ENCODE measurements at regions of chr9 and their contacts with region 1.

Region 1: DNA sequence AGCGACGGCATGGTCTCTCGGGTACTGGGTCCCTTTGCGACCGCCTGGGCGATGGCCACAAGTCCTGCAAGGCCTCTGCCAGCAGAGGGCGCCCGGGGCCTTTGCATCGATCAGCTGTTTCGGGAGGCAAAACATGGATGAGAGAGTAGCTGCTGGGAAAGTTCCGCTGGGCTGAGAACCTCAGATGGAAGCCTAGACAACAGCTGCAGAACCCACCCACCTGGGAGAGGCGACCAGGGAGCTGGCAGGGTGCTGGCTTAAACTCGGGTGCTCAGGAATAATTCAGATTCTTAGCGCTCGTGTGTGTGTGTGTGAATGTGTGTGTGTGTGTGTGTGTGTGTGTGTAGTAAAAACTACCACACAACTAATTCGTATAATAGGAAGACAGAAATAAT is 50.0 kb downstream of the TRIM32 start:
- DNase-seq: peak; percentile 1
- ATAC-seq: peak; percentile 91
- H3K4me3 ChIP-seq: no peak overlapping the region
- H3K27ac ChIP-seq: no peak overlapping the region
- H3K4me1 ChIP-seq: peaks cover 10% of the 10 kb centered on the region
- H3K27me3 ChIP-seq: no peaks in the 10 kb centered on the region
- CTCF ChIP-seq: peak; percentile 94 to 98 (median 96)
- EP300 ChIP-seq: no peak
- POLR2A ChIP-seq: no peak
- RAD21 ChIP-seq: peak; percentile 98

Region 2: DNA sequence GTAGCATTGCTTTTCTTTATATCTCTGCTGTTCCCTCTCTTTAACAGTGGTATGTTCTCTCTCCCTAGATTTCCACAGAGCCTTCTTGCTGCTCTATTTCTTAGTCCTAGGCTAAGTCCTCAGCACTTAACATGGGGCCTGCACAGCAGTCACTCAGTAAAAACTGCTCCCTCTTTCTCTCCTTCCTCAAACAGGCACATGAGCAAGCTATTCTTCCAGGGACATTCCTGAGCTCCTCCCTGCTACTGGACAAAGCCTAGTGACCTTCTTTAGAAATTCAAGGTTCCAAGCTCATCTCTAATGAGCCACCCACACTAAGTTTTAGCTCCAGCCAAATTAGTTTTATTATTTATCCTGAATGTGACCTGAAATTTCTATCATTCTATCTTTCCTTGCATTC is 10.5 kb before region 1 on chr9:
- CTCF ChIA-PET with region 1: interaction called, 11 read pairs
- POLR2A ChIA-PET with region 1: no interaction called
- RAD21 ChIA-PET with region 1: no interaction called
- SMC1A ChIA-PET with region 1: no interaction called
- in situ Hi-C with region 1: no loop called
- intact Hi-C with region 1: no loop called
- DNase-seq: no peak
- ATAC-seq: no peak
- H3K4me3 ChIP-seq: no peak overlapping the region
- H3K27ac ChIP-seq: no peak overlapping the region
- H3K4me1 ChIP-seq: no peaks in the 10 kb centered on the region
- H3K27me3 ChIP-seq: no peaks in the 10 kb centered on the region; a peak in 3 of 4 replicates
- CTCF ChIP-seq: no peak
- EP300 ChIP-seq: no peak
- POLR2A ChIP-seq: no peak
- RAD21 ChIP-seq: no peak

Region 3: GRCh38 chr9:116774421-116775180 is 37.5 kb after region 1 on chr9:
- CTCF ChIA-PET with region 1: no interaction called
- POLR2A ChIA-PET with region 1: no interaction called
- RAD21 ChIA-PET with region 1: no interaction called
- SMC1A ChIA-PET with region 1: no interaction called
- in situ Hi-C with region 1: no loop called
- intact Hi-C with region 1: no loop called
- DNase-seq: no peak
- ATAC-seq: no peak
- H3K4me3 ChIP-seq: no peak overlapping the region
- H3K27ac ChIP-seq: no peak overlapping the region
- H3K4me1 ChIP-seq: no peaks in the 10 kb centered on the region
- H3K27me3 ChIP-seq: no peaks in the 10 kb centered on the region
- CTCF ChIP-seq: no peak
- EP300 ChIP-seq: no peak
- POLR2A ChIP-seq: no peak
- RAD21 ChIP-seq: no peak

Region 4: GRCh38 chr9:116789081-116789480 is 51.9 kb after region 1 on chr9:
- CTCF ChIA-PET with region 1: no interaction called
- POLR2A ChIA-PET with region 1: no interaction called
- RAD21 ChIA-PET with region 1: no interaction called
- SMC1A ChIA-PET with region 1: no interaction called
- in situ Hi-C with region 1: no loop called
- intact Hi-C with region 1: no loop called
- DNase-seq: no peak
- ATAC-seq: no peak
- H3K4me3 ChIP-seq: no peak overlapping the region
- H3K27ac ChIP-seq: no peak overlapping the region
- H3K4me1 ChIP-seq: no peaks in the 10 kb centered on the region
- H3K27me3 ChIP-seq: no peaks in the 10 kb centered on the region
- CTCF ChIP-seq: no peak
- EP300 ChIP-seq: no peak
- POLR2A ChIP-seq: no peak
- RAD21 ChIP-seq: no peak

Region 5: DNA sequence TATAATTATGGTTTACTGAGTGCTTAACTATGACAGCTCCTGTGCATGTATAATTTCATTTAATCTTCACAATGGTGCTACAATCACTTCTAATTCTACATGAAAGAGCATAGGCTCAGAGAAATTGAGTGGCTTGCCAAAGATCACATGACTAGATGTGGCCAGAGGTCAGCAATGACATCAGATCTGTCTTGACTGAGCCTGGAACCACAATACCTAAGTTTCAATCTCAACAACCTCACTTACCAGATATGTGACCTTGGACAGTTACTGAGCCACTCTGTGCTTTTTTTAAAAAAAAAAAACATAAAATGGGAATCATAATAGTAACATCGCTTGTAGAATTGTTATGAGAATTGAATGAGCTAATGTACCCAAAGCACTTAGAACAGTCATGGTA is 80.6 kb after region 1 on chr9:
- CTCF ChIA-PET with region 1: no interaction called
- POLR2A ChIA-PET with region 1: no interaction called
- RAD21 ChIA-PET with region 1: no interaction called
- SMC1A ChIA-PET with region 1: no interaction called
- in situ Hi-C with region 1: no loop called
- intact Hi-C with region 1: no loop called
- DNase-seq: no peak
- ATAC-seq: peak; percentile 89
- H3K4me3 ChIP-seq: no peak overlapping the region
- H3K27ac ChIP-seq: no peak overlapping the region
- H3K4me1 ChIP-seq: no peaks in the 10 kb centered on the region
- H3K27me3 ChIP-seq: no peaks in the 10 kb centered on the region
- CTCF ChIP-seq: no peak
- EP300 ChIP-seq: no peak
- POLR2A ChIP-seq: no peak
- RAD21 ChIP-seq: no peak

Region 6: DNA sequence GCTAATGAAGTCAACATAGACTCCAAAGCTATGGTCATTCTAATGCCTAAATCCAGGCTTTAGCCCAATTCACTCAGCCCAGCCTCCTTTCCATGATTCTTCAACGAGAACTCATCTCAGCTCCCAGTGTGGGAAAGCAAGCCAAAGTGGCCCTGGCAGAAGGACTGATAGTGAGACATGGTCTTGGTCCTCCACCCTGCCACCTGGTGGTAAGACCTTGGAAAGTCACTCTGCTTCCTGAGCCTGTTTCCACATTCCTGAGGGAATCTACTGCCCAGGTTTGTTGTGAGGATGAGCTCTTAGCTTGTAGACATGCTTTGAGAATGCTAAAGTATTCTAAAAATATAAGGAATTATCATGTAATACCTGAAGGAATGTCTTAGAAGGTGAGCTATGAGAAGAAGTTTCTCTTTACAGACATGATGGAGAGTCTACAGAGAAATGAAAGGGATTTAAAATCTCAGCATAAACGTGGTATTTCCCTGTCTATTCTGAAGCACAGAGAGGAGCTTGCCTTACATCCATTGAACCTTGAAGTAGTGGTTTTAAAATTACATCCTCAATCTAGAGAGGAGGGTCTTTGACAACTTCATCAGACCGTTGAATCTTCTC is 123.5 kb after region 1 on chr9:
- CTCF ChIA-PET with region 1: interaction called, 173 read pairs
- POLR2A ChIA-PET with region 1: no interaction called
- RAD21 ChIA-PET with region 1: interaction called, 60 read pairs
- SMC1A ChIA-PET with region 1: interaction called, 78 read pairs
- in situ Hi-C with region 1: loop called (anchors 5 kb)
- intact Hi-C with region 1: loop called (anchors 1 kb)
- DNase-seq: no peak
- ATAC-seq: peak; percentile 78
- H3K4me3 ChIP-seq: no peak overlapping the region
- H3K27ac ChIP-seq: no peak overlapping the region
- H3K4me1 ChIP-seq: no peaks in the 10 kb centered on the region
- H3K27me3 ChIP-seq: no peaks in the 10 kb centered on the region
- CTCF ChIP-seq: peak; percentile 60 to 79 (median 77)
- EP300 ChIP-seq: no peak
- POLR2A ChIP-seq: no peak
- RAD21 ChIP-seq: peak; percentile 64

Region 7: DNA sequence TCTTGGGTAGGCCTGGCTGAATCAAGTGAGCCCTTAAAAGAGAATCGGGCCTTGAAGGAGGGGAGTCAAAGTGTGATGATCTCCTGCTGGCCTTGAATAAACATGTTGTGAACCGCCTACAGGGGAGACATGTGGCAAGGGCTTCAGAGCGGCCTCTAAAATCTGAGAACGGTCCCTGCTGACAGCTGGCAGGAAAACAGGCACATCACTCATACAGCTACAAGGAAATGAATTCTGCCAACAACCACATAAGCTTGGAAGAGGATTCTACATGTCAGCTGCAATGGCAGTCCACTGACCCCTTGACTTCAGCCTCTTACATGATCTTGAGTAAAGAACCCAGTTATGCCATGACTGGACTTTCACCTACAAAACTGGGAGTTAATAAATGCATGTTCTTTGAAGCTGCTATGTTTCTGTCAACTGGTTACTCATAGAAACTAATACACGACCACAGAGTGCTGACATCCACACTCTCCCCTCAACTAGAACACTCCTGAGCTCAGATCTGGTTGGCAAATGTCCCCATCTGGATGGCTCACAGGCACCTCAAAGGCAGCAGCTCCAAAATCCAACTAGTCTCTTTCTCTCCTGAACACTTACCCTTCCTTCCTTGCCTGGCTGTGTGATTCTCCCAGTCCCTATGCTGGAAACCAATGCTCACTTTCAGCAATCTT is 344.6 kb after region 1 on chr9:
- CTCF ChIA-PET with region 1: interaction called, 4 read pairs
- POLR2A ChIA-PET with region 1: no interaction called
- RAD21 ChIA-PET with region 1: no interaction called
- SMC1A ChIA-PET with region 1: no interaction called
- in situ Hi-C with region 1: no loop called
- intact Hi-C with region 1: loop called (anchors 10 kb)
- DNase-seq: no peak
- ATAC-seq: peak; percentile 44; the same call in 2 of the 3 replicates
- H3K4me3 ChIP-seq: no peak overlapping the region
- H3K27ac ChIP-seq: no peak overlapping the region
- H3K4me1 ChIP-seq: no peaks in the 10 kb centered on the region
- H3K27me3 ChIP-seq: no peaks in the 10 kb centered on the region; a peak in 1 of 4 replicates
- CTCF ChIP-seq: no peak
- EP300 ChIP-seq: no peak
- POLR2A ChIP-seq: no peak
- RAD21 ChIP-seq: no peak

Region 8: GRCh38 chr9:117555964-117556629 is 818.9 kb after region 1 on chr9:
- CTCF ChIA-PET with region 1: interaction called, 3 read pairs
- POLR2A ChIA-PET with region 1: no interaction called
- RAD21 ChIA-PET with region 1: no interaction called
- SMC1A ChIA-PET with region 1: no interaction called
- in situ Hi-C with region 1: no loop called
- intact Hi-C with region 1: loop called (anchors 1 kb)
- DNase-seq: peak; percentile 7
- ATAC-seq: peak; percentile 94
- H3K4me3 ChIP-seq: no peak overlapping the region
- H3K27ac ChIP-seq: no peak overlapping the region
- H3K4me1 ChIP-seq: no peaks in the 10 kb centered on the region
- H3K27me3 ChIP-seq: no peaks in the 10 kb centered on the region
- CTCF ChIP-seq: peak; percentile 58 to 81 (median 71)
- EP300 ChIP-seq: no peak
- POLR2A ChIP-seq: no peak
- RAD21 ChIP-seq: peak; percentile 61

Measured in GM12878 (cell line).